ENCODE measurements at regions of chr11 and their contacts with region 1.

Region 1: DNA sequence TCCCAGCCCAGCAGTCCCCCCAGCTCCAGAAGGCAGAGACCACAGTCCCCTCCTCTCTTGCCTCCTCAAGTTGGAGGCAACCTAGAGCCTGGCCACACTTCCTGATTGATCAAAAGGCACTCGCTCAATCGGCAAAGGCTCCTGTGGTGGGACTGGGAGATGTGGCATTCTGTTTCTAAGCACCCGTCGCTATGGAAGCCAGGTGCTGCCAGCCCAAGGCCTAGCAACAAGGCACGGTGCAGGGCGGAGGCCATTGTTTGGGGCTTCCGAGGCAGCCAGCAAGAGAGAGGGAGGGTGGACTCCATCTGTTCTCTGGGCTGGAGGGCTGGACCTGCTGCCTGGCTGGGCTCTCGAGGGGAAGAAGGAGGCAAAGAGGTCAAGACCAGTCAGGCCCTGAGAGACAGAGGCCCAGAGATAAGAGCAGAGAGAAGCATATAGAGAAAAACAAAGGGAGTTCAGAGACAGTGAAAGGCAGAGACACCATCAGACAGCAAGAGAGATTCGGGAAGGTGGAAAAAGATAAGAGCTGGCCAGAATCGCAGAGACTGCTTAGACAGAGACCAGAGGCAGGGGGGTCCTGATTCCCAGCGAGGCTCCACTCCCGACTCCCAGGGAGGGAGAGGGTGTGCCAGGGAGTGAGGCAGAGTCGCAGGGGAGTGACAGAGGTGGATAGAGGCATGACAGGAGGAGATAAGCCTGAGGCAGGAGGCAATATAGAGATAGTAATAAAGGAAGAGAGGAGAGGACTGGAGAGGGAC is 21.2 kb downstream of the PDE2A start:
- DNase-seq: peak; percentile 58

Region 2: GRCh38 chr11:72541257-72541974 is 111.6 kb before region 1 on chr11:
- in situ Hi-C with region 1: loop called (anchors 10 kb)
- DNase-seq: no peak

Region 3: DNA sequence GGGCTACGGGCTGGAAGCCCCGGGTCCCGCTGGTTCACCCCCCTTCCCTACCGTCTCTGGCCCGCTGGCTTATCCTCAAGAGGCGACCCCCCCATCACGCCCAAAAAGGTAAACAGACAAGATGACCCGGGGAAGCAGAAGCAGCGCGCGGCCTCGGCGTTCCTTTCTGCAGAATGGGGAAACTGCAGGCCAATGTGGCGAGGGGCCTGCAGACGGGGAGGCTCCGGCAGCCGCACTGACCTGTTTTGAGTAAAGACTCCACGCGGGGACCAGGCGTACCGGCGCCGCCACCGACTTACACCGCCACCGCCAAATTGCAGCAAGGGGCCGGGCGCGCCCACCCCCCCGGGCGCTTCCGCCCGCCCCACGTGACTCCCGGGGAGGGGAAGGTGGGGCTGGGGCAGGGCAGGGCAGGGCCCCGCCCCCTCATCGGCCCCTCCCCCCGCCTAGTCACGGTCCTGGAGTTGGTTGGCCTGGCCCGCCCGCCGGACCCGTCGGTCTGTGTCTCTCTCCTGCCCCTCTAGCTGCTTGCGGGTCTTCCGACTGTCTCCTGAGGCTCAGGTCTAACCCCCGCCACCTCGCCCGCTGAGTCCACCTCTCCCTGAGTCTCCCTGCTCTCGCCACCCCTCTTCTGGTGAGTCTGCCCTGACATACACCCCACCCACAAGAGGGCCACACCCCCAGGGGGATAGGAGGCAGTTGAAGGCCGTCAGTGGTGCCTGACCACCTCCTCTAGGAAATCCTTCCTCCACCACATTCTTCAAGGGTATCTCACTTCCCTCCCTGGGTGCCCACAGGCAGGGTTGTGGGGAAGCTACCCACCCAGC is 99.2 kb after region 1 on chr11 and contains the start of gene ARAP1:
- in situ Hi-C with region 1: loop called (anchors 10 kb)
- DNase-seq: peak; percentile 30
- total RNA-seq, gene ARAP1: 89.9 and 113 TPM in 2 replicates

Measured in G401 (cell line).